ENCODE measurements at regions of chr7 and their contacts with region 1.

Region 1: GRCh38 chr7:44240983-44241510 is 40.3 kb downstream of the YKT6 start:
- DNase-seq: peak; percentile 56
- H3K4me3 ChIP-seq: no peak overlapping the region
- H3K27ac ChIP-seq: no peak overlapping the region
- H3K27me3 ChIP-seq: peaks cover 29% of the 10 kb centered on the region
- CTCF ChIP-seq: peak; percentile 85

Region 2: GRCh38 chr7:44218418-44219201 is 22.4 kb before region 1 on chr7:
- CTCF ChIA-PET with region 1: no interaction called
- POLR2A ChIA-PET with region 1: no interaction called
- DNase-seq: no peak
- H3K4me3 ChIP-seq: no peak overlapping the region
- H3K27ac ChIP-seq: no peak overlapping the region
- H3K27me3 ChIP-seq: peaks cover 8% of the 10 kb centered on the region
- CTCF ChIP-seq: peak; percentile 26; the same call in 1 of the 2 replicates

Region 3: DNA sequence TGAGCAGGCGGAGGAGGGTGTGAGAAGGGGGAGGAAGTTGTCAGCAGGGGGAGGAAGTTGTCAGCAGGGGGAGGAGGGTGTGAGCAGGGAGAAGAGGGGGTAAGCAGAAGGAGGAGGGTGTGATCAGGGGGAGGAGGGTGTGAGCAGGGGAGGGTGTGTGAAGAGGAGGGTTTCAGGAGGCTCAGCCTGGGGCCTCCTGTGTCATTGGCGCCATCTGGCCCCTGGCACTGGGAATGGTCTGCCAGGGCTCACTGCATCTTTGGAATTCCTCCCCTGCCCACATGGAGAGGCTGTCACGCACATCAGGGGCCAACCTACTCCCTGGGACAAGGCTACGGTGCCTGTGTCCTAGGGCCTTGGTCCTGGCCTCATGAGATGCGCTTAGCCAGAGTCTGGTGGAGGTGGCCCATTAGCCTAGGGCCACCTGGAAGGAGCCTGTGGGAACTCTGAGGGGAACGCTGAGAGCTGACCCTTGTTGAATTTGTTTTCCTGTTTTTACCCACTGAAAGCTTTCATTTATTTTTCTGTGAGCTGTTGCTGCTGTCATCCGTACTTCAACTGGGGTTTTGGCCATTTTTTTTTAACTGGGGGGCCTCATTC is 66.4 kb after region 1 on chr7:
- CTCF ChIA-PET with region 1: interaction called, 13 read pairs
- POLR2A ChIA-PET with region 1: no interaction called
- DNase-seq: no peak
- H3K4me3 ChIP-seq: no peak overlapping the region
- H3K27ac ChIP-seq: no peak overlapping the region
- H3K27me3 ChIP-seq: peaks cover 24% of the 10 kb centered on the region
- CTCF ChIP-seq: peak; percentile 43

Region 4: DNA sequence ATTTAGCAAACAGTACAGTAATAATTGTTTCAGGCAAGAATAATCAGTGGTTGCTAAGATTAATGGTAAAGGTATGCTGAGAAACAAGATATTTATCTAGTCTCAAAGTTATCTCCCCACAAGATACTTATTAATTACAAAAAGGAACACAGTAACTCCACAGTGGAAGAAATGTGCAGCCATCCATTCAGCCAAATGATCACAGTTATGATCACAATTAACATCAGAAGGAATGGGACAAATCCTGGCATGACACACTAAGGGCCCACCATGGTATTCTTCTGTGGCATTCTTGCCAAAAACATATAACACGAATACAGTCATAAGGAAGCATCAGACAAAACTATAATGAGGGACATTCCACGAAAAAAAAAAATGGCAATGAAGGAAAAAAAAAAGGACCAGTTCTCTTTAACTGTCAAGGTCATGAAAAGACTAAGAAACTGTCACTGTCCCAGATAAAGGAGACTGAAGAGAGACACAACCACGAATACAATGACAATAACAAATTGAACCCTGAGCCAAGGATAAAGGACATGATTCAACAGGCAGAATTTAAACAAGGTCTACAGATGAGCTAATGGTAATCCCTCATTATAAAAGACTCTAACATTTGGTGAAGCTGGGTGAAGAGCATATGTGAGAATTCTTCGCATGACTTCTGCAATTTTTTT is 228.6 kb after region 1 on chr7:
- CTCF ChIA-PET with region 1: interaction called, 36 read pairs
- POLR2A ChIA-PET with region 1: no interaction called
- DNase-seq: no peak
- H3K4me3 ChIP-seq: no peak overlapping the region
- H3K27ac ChIP-seq: no peak overlapping the region
- H3K27me3 ChIP-seq: no peaks in the 10 kb centered on the region
- CTCF ChIP-seq: no peak

Region 5: DNA sequence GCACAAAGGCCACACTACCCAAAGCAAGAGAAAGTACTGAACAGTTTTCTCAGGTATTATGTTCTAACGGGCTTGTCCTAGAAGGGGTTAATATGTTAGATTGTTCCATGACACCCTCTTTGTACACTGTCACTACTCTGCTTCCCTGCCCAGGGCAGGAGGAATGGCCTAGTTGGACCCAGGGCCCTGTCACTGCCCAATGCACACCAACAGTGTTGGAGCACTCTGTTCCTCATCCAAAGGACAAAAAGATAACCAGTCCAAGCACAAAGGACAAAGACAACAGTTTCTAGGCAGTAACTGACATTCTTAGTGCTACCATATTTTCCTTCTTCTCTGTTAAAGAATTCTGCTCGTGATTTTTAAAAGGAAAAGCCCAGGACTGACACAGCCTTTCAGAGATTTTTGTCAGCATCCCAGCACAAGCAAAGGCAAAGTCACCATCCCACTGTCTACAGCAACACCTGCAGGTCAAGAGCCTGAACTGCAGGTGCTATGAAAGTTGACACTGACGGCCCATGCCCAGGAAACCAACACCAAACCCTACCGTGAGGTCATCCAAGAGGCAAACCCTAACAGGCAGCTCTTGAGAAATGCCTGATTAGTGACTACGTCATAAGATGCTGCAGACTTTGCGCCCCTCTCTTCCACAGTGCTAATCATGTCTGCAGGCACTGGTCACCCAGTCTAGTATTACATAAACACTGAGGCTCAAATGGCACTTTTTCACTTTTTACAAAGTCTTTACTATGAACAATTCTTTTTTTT is 236.2 kb after region 1 on chr7:
- CTCF ChIA-PET with region 1: interaction called, 36 read pairs
- POLR2A ChIA-PET with region 1: no interaction called
- DNase-seq: peak; percentile 59
- H3K4me3 ChIP-seq: no peak overlapping the region
- H3K27ac ChIP-seq: no peak overlapping the region
- H3K27me3 ChIP-seq: no peaks in the 10 kb centered on the region
- CTCF ChIP-seq: peak; percentile 99

Region 6: DNA sequence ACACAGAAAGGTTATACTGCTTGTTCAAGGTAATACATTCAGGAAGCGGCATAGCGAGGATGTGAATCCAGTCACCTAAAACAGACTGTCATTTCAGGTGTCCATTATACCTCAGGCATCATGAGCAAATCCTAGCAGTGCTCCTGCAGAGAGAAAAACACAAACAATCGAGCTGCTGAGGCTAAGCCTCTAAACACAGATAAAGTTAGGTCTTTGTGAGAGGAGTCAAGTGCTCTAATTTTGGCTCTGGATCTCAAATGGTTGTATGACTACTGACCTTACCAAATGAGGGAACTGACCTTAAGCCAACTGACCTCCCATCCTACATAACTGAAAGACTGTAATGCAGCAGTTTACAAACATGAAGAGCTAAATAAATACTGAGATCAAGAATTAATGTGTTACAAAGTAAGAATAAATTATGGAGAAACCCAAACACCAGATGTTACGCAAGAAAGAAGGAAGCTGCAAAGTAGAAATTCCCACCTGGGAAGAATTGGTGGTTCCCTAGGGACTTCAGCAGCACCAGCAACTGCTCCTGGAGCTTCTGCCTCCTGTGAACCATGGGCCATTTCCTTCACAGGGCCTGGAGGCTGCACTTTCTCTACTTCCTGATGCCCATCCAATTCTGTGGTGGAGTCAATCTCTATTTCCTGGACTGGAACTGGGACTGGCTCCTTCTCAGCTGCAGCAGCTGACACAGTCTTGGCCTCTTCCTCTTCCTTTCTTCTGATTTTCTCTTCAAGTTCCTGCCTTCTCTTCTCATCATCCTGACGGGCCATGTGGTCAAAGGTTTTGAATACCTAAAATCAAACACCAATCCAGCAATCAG is 243.7 kb after region 1 on chr7:
- CTCF ChIA-PET with region 1: interaction called, 17 read pairs
- POLR2A ChIA-PET with region 1: no interaction called
- DNase-seq: no peak
- H3K4me3 ChIP-seq: no peak overlapping the region
- H3K27ac ChIP-seq: no peak overlapping the region
- H3K27me3 ChIP-seq: no peaks in the 10 kb centered on the region
- CTCF ChIP-seq: no peak

Region 7: DNA sequence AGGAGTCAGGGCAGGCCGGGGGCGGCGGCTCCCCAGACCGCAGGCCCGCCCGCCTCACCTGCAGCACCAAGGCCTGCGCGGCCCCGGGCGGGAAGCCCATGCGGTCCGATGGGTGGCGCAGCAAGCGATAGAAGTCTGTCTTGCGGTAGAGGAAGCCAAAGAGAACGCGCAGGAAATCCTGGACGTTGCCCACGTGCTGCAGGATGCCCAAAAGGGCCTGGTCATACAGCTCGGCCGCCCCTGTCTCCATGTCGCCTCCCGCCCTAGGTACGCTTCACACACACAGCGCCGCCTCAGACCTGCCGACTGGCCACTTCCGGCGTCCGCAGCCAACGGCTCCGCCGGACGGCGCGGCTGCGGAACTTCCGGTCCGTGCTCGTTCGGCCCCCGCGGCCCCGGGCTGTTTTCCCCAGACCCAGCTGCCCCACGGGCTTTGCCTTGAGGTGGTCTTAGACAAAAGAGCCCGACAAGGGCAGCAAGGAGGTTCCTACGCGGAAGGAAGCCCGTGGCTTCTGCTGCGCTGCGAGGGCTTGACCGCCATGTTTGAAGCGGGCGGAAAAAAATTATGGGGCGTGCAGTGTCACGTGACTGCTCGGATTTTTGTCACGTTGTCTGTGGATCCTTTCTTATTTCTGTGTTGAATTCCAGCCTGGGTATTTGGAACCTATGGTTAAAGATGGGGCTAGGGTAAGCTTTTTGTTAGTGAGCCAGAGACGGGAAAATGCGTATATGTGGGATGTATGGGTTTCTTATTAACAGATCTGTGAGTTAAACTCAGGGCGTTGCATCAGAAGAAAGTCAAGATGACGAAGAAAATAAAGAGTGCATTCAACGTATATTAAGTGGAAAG is 249.5 kb after region 1 on chr7 and contains the start of gene NUDCD3:
- CTCF ChIA-PET with region 1: interaction called, 13 read pairs
- POLR2A ChIA-PET with region 1: no interaction called
- DNase-seq: peak; percentile 30
- H3K4me3 ChIP-seq: peak within 1 kb of the TSS; percentile 95
- H3K27ac ChIP-seq: peak within 1 kb of the TSS; percentile 99
- H3K27me3 ChIP-seq: no peaks in the 10 kb centered on the region
- CTCF ChIP-seq: peak; percentile 34; the same call in 1 of the 2 replicates
- polyA plus RNA-seq, gene NUDCD3: 61.4 and 77.0 TPM in 2 replicates

Region 8: DNA sequence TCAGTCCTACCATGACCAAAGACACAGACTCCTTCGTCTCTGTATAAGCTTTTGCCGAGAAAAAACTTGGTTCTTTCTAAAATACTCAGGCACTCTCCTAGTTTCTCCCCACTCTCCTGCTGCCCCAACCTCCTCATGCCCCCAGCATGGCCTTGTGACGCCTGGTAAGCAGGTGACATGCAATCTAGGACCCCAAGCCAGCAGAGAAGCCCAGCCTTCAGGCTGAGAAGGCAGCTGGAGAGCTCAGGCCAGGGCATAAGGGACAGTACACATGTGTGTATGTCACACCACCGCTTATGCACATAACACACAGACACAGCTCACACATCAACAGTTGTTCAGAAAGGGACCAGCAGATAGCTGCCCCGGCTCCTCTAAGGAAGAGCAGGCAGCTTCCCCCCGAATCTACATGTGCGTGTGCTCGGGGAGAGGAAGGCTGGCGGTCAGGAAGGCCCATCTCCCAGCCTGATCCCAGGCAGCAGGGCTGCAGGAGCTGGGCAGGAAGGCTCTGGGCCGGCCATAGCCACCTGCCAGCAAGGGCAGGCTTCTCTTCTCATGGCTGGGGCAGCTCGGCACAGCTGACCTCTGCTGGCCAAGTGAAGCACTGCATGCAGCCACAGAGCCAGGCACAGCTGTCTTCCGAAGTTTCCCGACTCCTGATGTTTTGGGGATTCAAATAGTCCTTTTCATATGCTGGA is 324.2 kb after region 1 on chr7:
- CTCF ChIA-PET with region 1: interaction called, 58 read pairs
- POLR2A ChIA-PET with region 1: no interaction called
- DNase-seq: no peak
- H3K4me3 ChIP-seq: no peak overlapping the region
- H3K27ac ChIP-seq: no peak overlapping the region
- H3K27me3 ChIP-seq: no peaks in the 10 kb centered on the region
- CTCF ChIP-seq: peak; percentile 99